Activated CD4-positive, alpha-beta T cell treated with anti-CD3 and anti-CD28 coated beads, Interleukin-2, amount 10 ng/mL, durations not matched to agents 24 days and 14 days (primary cell): ENCODE measurements at regions of chr1 and their contacts with region 1.

Region 1: GRCh38 chr1:55021965-55022546 is 17.3 kb upstream of the PCSK9 start:
- DNase-seq: peak; percentile 90
- H3K4me3 Mint-ChIP-seq: no peak overlapping the region
- H3K27ac Mint-ChIP-seq: no peak overlapping the region
- H3K4me1 Mint-ChIP-seq: peaks cover 3% of the 10 kb centered on the region
- H3K27me3 Mint-ChIP-seq: peaks cover 4% of the 10 kb centered on the region

Region 2: DNA sequence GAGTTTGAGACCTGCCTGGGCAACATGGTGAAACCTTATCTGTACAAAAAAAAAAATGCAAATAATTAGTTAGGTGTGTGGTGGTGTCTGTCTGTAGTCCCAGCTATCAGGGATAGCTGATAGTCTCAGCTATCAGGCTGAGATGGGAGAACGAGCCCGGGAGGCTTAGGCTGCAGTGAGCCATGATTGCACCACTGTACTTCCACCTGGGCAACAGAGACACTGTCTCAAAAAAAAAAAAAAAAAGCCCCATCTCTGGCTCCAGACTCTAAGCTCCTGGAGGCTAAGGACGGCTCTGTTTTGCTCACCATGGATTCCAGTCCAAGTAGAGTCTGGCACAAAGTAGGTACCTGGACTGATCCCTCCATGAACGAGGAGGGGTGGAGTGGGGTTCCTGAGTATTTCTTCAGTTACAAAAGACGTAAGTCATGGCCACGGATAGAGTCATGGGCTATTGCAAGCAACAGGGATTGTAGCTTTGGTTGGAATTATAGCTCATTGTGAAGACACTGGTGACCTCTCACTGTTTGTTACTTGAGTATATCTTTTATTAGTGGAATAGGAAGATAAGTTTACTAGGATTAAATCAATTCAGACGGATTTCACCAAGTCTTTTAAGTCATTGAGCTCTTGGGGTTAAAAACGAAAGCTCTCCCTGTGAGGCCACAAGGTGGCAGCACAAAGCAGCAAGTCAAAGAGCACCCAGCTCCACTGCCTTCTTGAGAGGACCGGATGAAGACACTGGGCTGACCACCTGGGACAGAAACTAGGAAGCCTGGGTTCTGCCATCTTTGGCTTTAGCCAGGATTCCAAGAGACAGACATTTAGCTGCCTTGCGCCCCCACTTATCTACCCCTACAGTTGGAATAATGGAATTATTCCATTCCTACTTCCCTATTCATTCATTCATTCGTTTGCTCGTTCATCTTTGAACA is 77.2 kb before region 1 on chr1:
- intact Hi-C with region 1: loop called (anchors 1 kb)
- DNase-seq: peak; percentile 89
- H3K4me3 Mint-ChIP-seq: no peak overlapping the region
- H3K27ac Mint-ChIP-seq: no peak overlapping the region
- H3K4me1 Mint-ChIP-seq: peaks cover 17% of the 10 kb centered on the region
- H3K27me3 Mint-ChIP-seq: peaks cover 14% of the 10 kb centered on the region

Region 3: DNA sequence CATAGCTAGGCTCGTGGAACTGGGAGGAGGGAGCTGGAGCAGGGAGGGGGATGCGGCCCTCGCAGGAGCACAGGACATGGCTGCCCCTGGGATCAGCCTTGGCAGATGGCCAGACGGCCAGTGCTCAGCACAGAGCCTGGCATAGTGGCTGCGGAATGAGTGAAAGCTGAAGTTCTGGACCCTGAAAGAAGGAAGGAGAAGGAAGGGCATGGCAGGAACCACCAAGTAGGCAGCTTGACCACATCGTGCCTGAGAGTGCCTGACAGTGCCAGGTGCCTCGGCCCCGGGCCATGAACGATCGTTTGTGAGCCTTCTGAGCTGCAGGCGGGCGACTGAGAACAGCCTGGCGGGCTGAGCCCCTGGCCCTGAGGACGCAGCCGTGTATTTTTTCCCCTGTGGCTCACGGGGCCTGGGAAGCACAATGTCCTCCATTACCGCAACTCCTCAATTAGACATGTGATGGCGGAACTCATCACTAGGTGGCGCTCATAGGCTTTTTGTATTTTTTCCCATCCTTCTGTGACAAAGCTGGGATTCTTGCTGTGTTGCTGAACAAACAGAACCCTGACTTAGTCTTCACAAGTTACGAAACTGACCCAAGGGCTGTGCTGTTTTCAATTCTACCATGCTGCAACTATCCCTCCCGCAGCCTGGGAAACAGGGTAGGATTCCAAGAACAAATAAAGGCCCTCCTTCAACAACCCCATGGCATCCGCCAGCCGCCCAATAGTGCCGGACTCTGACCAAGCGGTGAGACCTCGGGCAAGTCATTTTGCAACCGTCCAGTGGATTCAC is 71.5 kb before region 1 on chr1:
- intact Hi-C with region 1: loop called (anchors 1 kb)
- DNase-seq: peak; percentile 88
- H3K4me3 Mint-ChIP-seq: no peak overlapping the region
- H3K27ac Mint-ChIP-seq: no peak overlapping the region
- H3K4me1 Mint-ChIP-seq: peaks cover 13% of the 10 kb centered on the region
- H3K27me3 Mint-ChIP-seq: peaks cover 3% of the 10 kb centered on the region